Gastrocnemius medialis (tissue), 4 donors: ENCODE measurements at regions of chr18 and their contacts with region 1.

Region 1: DNA sequence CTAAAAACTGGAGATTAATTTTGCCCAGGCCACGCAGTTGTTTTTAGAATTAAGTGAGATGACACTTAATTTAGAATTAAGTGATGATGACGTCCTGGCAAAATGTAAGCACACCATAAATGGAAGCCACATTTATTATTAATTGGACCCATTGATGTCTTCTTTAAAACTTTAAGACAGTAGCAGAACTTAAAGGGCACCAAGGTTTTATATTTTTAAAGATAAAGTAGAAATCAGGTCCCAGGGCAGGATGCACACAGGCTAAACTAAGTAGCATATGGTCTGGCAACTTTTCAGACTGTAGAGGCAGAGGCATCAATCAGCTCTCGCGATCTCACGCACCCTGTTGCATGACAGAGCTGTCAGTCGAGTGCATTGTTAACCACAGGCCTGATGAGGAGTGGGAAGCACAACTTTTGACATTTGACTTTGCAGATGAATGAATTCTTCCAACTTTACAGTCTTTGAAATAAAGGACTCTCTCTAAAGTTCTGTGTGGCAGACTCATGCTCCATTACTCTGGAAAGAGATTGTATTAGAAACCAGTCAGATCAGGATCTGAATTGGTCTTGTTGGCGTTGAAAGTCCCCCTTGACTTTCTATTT is 232.4 kb downstream of the CD226 start:
- DNase-seq: no peak
- ATAC-seq: no peak
- H3K4me3 ChIP-seq: no peak overlapping the region
- H3K27ac ChIP-seq: no peak overlapping the region
- H3K4me1 ChIP-seq: no peaks in the 10 kb centered on the region
- H3K27me3 ChIP-seq: no peaks in the 10 kb centered on the region
- CTCF ChIP-seq: no peak
- POLR2A ChIP-seq: no peak

Region 2: GRCh38 chr18:69617888-69618287 is 97.4 kb before region 1 on chr18:
- in situ Hi-C with region 1: no loop called
- intact Hi-C with region 1: no loop called
- DNase-seq: no peak
- ATAC-seq: no peak
- H3K4me3 ChIP-seq: no peak overlapping the region
- H3K27ac ChIP-seq: no peak overlapping the region
- H3K4me1 ChIP-seq: no peaks in the 10 kb centered on the region
- H3K27me3 ChIP-seq: no peaks in the 10 kb centered on the region
- CTCF ChIP-seq: no peak
- POLR2A ChIP-seq: no peak

Region 3: GRCh38 chr18:69817335-69817940 is 102.1 kb after region 1 on chr18:
- in situ Hi-C with region 1: loop called in 1 of 4 experiments (anchors 25 kb)
- intact Hi-C with region 1: no loop called
- DNase-seq: no peak
- ATAC-seq: no peak
- H3K4me3 ChIP-seq: no peak overlapping the region
- H3K27ac ChIP-seq: no peak overlapping the region
- H3K4me1 ChIP-seq: no peaks in the 10 kb centered on the region
- H3K27me3 ChIP-seq: no peaks in the 10 kb centered on the region
- CTCF ChIP-seq: no peak
- POLR2A ChIP-seq: no peak

Region 4: GRCh38 chr18:69935319-69936190 is 220.3 kb after region 1 on chr18:
- in situ Hi-C with region 1: no loop called
- intact Hi-C with region 1: no loop called
- DNase-seq: no peak
- ATAC-seq: no peak
- H3K4me3 ChIP-seq: no peak overlapping the region
- H3K27ac ChIP-seq: no peak overlapping the region
- H3K4me1 ChIP-seq: no peaks in the 10 kb centered on the region
- H3K27me3 ChIP-seq: no peaks in the 10 kb centered on the region
- CTCF ChIP-seq: no peak
- POLR2A ChIP-seq: no peak

Region 5: GRCh38 chr18:70636991-70637390 is 921.7 kb after region 1 on chr18:
- in situ Hi-C with region 1: no loop called
- intact Hi-C with region 1: no loop called
- DNase-seq: no peak
- ATAC-seq: no peak
- H3K4me3 ChIP-seq: no peak overlapping the region
- H3K27ac ChIP-seq: no peak overlapping the region
- H3K4me1 ChIP-seq: no peaks in the 10 kb centered on the region
- H3K27me3 ChIP-seq: no peaks in the 10 kb centered on the region
- CTCF ChIP-seq: no peak
- POLR2A ChIP-seq: no peak